Astrocyte of the cerebellum (primary cell): ENCODE measurements at regions of chr3 and their contacts with region 1.

Region 1: DNA sequence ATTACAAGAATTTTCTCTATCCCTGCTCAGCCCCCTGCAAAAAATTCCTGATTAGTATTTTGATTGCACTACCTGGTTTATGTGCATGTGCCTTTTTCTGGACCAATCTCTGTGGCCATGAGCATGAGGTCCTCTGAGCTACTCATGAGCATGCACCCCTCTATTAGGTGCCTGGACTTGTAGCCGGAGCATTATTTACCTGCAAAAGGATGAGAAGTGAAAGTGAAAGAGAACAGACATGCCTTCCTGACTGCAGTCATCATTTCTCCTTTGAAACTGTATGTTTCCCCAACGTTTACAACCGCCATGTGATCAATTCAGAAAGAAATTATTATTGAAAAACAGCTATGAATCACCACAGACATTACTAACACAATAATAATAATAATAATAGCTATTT is 1008.8 kb downstream of the ROBO2 start:
- DNase-seq: no peak
- H3K4me3 ChIP-seq: no peak overlapping the region
- CTCF ChIP-seq: no peak

Region 2: DNA sequence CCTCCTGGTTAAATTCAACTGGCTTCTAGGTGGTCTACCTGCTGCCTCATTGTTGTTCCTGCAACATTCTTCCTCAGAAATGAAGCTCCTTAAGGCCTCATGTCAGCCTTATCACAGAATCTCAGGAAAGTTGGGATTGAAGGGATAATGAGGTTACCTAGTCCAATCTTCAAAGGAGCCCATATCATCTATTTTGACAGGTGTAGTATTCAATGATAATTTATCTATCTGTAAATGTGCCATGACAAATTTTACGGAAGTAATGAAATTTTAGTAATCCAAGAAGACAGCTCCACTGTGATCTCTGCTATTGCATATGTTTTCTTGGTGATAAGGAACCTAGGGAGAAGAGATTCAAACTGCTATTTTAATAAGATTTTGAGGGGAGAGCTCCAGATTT is 35.0 kb before region 1 on chr3:
- in situ Hi-C with region 1: no loop called
- DNase-seq: no peak
- H3K4me3 ChIP-seq: no peak overlapping the region
- CTCF ChIP-seq: no peak

Region 3: GRCh38 chr3:78086150-78086549 is 37.5 kb after region 1 on chr3:
- in situ Hi-C with region 1: loop called (anchors 5 kb)
- DNase-seq: no peak
- H3K4me3 ChIP-seq: no peak overlapping the region
- CTCF ChIP-seq: no peak